Dorsolateral prefrontal cortex (tissue), 120 donors: ENCODE measurements at regions of chr2 and their contacts with region 1.

Region 1: DNA sequence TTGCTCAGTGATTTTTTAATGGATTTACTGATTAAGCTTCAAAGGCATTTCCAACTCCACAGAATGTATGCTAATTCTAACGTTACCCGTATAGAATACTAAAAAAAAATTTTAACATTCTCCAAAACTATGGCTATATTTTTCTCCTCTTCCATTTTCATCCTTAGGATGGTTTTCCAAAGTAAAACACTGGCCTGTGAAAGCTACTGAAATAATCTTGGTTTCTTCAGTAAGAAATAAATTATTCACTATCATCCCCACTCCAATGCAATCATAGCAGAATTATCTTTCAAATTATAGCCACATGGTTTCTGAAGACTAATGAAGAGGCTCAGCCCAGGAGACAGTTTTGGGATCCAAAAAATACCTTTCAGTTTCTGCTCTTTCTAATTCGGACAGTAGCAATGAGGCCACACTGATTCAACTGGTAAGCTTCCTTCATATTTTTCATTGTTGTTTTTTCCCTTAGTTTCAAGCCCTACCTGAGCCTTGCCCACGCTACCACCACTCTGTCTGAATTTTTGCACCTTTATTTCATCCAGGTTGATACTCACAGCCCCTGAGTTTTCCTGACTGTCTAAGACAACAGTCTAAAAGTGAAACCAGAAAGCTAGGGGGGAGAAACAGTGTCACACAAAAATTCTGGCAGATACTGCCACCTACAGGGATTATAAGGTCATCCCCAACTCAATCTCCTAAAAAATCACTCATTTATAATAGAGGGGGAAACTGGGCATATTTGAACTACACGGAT is 887.9 kb downstream of the NRXN1 start:
- DNase-seq: peak in 1 of 10 donors; percentile 38
- H3K4me3 ChIP-seq: peak overlapping the region in 58 of 59 donors; percentile 0 to 67 (median 46)
- H3K27ac ChIP-seq: peak overlapping the region in 19 of 59 donors; percentile 2 to 71 (median 28)
- H3K27me3 ChIP-seq: no peaks in the 10 kb centered on the region
- CTCF ChIP-seq: peak; percentile 50 to 86 (median 74)

Region 2: GRCh38 chr2:49616800-49617199 is 527.2 kb before region 1 on chr2:
- intact Hi-C with region 1: loop called in 1 of 2 experiments (anchors 10 kb)
- DNase-seq: no peak
- H3K4me3 ChIP-seq: no peak overlapping the region
- H3K27ac ChIP-seq: no peak overlapping the region
- H3K27me3 ChIP-seq: no peaks in the 10 kb centered on the region
- CTCF ChIP-seq: peak in 55 of 56 donors; percentile 40 to 72 (median 60)

Region 3: GRCh38 chr2:49687918-49688317 is 456.1 kb before region 1 on chr2:
- intact Hi-C with region 1: loop called (anchors 5 to 10 kb)
- DNase-seq: no peak
- H3K4me3 ChIP-seq: no peak overlapping the region
- H3K27ac ChIP-seq: peak overlapping the region in 9 of 59 donors; percentile 0 to 55 (median 26)
- H3K27me3 ChIP-seq: no peaks in the 10 kb centered on the region
- CTCF ChIP-seq: peak; percentile 42 to 73 (median 62)

Region 4: GRCh38 chr2:49770919-49771318 is 373.1 kb before region 1 on chr2:
- intact Hi-C with region 1: loop called (anchors 2 to 5 kb)
- DNase-seq: peak in 9 of 10 donors; percentile 5 to 71 (median 53)
- H3K4me3 ChIP-seq: peak overlapping the region in 1 of 59 donors; percentile 26
- H3K27ac ChIP-seq: no peak overlapping the region
- H3K27me3 ChIP-seq: no peaks in the 10 kb centered on the region
- CTCF ChIP-seq: peak in 53 of 56 donors; percentile 22 to 77 (median 54)

Region 5: DNA sequence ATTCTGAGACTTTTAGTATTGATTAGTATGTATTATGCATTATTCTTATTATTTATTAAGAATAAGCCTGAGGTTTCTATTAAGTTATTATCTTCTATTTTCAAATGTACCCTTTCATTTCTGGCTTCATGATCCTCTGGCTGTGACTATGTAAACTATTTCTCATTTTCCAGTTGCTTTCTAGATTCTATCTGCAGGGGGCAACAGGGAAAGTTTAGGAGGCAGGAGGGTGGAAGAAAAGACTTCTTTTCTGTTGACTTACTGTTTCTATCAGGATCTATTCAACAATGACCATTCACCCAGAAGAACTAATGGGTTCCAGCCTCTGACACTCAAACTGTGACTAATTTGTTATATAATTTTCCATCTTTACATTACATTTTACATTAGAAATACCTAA is 336.3 kb before region 1 on chr2:
- intact Hi-C with region 1: no loop called
- DNase-seq: no peak
- H3K4me3 ChIP-seq: no peak overlapping the region
- H3K27ac ChIP-seq: no peak overlapping the region
- H3K27me3 ChIP-seq: no peaks in the 10 kb centered on the region
- CTCF ChIP-seq: no peak